ENCODE measurements at regions of chr15 and their contacts with region 1.

Region 1: GRCh38 chr15:78460737-78461136 is 22.7 kb downstream of the IREB2 start:
- DNase-seq: no peak
- ATAC-seq: no peak
- H3K4me3 ChIP-seq: no peak overlapping the region
- H3K27ac ChIP-seq: peak overlapping the region; percentile 95
- H3K4me1 ChIP-seq: peaks cover 49% of the 10 kb centered on the region
- H3K27me3 ChIP-seq: no peaks in the 10 kb centered on the region
- CTCF ChIP-seq: no peak

Region 2: GRCh38 chr15:78565097-78565951 is 104.6 kb after region 1 on chr15 and contains the start of gene CHRNA5:
- CTCF ChIA-PET with region 1: interaction called, 10 read pairs
- POLR2A ChIA-PET with region 1: no interaction called
- in situ Hi-C with region 1: no loop called
- intact Hi-C with region 1: no loop called
- DNase-seq: peak; percentile 70
- ATAC-seq: peak; percentile 97
- H3K4me3 ChIP-seq: peak within 1 kb of the TSS; percentile 85 to 95
- H3K27ac ChIP-seq: peak within 1 kb of the TSS; percentile 93
- H3K4me1 ChIP-seq: peaks cover 13% of the 10 kb centered on the region
- H3K27me3 ChIP-seq: no peaks in the 10 kb centered on the region
- CTCF ChIP-seq: no peak
- total RNA-seq, gene CHRNA5: 52.4 TPM

Region 3: GRCh38 chr15:78726870-78727551 is 266.3 kb after region 1 on chr15:
- CTCF ChIA-PET with region 1: no interaction called
- POLR2A ChIA-PET with region 1: no interaction called
- in situ Hi-C with region 1: no loop called
- intact Hi-C with region 1: no loop called
- DNase-seq: no peak
- ATAC-seq: 0 out of 2 replicates have a peak, but pooled peaks have one; percentile 53
- H3K4me3 ChIP-seq: no peak overlapping the region
- H3K27ac ChIP-seq: no peak overlapping the region
- H3K4me1 ChIP-seq: no peaks in the 10 kb centered on the region
- H3K27me3 ChIP-seq: no peaks in the 10 kb centered on the region
- CTCF ChIP-seq: no peak

Region 4: DNA sequence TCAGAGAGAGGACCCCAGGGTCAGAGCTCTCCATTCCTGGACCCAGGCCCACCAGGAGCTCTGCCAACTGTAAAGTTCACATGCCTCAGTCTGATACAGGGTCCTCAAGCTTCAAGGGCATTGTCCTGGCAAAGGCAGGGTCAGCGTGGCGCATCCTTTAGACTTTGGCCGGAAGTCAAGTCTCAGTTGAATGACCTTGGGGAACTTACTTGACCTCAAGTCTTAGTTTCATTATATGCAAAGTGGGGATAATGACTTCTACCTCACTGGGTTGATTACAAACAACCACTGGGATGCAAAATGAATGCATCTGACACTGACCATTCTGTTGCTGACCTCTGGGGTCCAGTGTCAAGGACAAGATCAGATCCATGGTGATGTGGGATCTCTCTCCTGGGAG is 554.7 kb after region 1 on chr15:
- CTCF ChIA-PET with region 1: no interaction called
- POLR2A ChIA-PET with region 1: no interaction called
- in situ Hi-C with region 1: no loop called
- intact Hi-C with region 1: no loop called
- DNase-seq: no peak
- ATAC-seq: no peak
- H3K4me3 ChIP-seq: no peak overlapping the region
- H3K27ac ChIP-seq: no peak overlapping the region
- H3K4me1 ChIP-seq: no peaks in the 10 kb centered on the region
- H3K27me3 ChIP-seq: no peaks in the 10 kb centered on the region
- CTCF ChIP-seq: no peak

Measured in Panc1 (cell line).